HAP-1 (cell line): ENCODE measurements at regions of chr11 and their contacts with region 1.

Region 1: GRCh38 chr11:68447015-68447801 is 13.3 kb upstream of the PPP6R3 start:
- DNase-seq: peak; percentile 42 to 86
- H3K4me3 ChIP-seq: no peak overlapping the region
- H3K4me1 ChIP-seq: no peaks in the 10 kb centered on the region
- H3K27me3 ChIP-seq: no peaks in the 10 kb centered on the region

Region 2: DNA sequence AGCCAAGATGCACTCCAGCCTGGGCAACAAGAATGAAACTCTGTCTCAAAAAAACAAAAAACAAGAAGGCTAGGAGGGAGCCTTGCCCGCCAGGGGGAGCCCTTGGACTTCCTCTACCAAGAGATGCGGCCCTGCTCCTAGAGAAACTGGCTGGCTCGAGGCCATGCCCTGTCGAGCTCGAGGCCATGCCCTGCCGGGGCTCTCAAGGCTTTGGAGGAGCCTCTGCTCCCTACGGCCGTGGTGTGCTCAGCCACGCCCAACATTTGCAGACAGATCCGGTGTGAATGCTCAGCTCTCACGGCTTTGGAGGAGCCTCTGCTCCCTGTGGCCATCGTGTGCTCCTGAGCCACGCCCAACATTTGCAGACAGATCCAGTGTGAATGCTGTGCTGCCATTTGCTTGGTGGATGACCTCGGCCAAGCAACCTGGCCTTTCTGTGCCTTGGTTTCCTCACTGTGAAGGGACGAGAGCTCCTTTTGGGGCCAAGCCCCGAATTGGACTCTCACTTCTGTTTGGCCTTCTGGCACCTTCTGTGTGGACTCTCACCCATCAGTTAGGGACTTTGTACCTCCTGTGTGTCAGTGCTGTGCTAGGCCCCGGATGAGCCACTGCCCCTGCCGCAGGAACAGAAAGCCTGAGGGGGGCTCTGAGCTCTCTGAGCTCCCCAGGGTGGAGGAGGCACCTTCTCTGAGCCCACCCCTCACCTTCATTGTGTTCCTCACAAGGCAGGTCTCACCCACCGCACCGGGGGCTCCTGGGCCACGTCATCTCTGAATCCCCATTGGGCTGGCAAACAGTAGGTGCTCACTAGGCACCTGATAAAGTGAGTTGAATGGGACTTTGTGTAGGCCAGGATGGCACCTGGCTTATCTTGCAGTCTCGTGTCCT is 189.5 kb before region 1 on chr11:
- in situ Hi-C with region 1: loop called (anchors 10 kb)
- DNase-seq: peak; percentile 77 to 98
- H3K4me3 ChIP-seq: no peak overlapping the region
- H3K4me1 ChIP-seq: peaks cover 4% of the 10 kb centered on the region
- H3K27me3 ChIP-seq: no peaks in the 10 kb centered on the region